ENCODE measurements at regions of chr1 and their contacts with region 1.

Region 1: GRCh38 chr1:37859507-37860345 is at the start of gene MTF1:
- DNase-seq: peak; percentile 98 to 99 (median 98)
- H3K4me3 ChIP-seq: peak within 1 kb of the TSS; percentile 66 to 99 (median 95)
- H3K27ac ChIP-seq: peak within 1 kb of the TSS; percentile 95 to 98
- H3K4me1 ChIP-seq: peaks cover 9 to 25% (median 21%) of the 10 kb centered on the region in 4 experiments
- H3K27me3 ChIP-seq: no peaks in the 10 kb centered on the region

Region 2: DNA sequence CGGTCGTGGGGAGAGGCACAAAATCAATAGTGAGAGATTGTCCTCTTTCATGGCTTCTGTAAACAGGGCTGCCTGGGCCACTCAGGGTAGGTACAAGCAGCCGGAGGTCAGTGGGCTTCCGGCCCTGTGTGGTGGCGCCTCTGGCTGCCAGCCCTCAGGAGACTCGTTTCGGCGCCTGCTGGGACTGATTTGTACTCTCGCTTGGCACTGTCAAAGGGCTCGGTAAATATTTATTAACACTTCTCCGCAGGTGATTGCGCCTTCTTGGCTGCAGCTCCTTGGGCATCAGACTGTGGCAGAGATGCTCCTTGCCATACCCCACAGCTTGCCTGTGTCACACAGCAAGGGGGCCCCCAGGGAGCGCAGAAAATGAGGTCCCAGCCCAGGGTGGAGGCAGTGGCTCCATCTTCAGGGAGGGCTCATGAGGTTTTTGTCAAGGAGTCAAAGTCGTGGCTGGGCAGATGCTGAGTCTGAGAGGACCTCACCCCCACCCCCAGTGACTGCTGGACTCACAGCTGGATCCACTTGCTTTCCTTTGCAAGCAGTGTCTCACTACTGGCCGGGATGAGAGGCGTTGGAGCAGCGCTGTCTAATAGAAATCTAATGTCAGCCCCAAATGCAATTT is 1088.0 kb before region 1 on chr1:
- CTCF ChIA-PET with region 1: no interaction called
- POLR2A ChIA-PET with region 1: no interaction called
- DNase-seq: no peak
- H3K4me3 ChIP-seq: no peak overlapping the region
- H3K27ac ChIP-seq: no peak overlapping the region
- H3K4me1 ChIP-seq: no peaks in the 10 kb centered on the region
- H3K27me3 ChIP-seq: peaks cover 0 to 84% (median 29%) of the 10 kb centered on the region in 5 experiments

Region 3: DNA sequence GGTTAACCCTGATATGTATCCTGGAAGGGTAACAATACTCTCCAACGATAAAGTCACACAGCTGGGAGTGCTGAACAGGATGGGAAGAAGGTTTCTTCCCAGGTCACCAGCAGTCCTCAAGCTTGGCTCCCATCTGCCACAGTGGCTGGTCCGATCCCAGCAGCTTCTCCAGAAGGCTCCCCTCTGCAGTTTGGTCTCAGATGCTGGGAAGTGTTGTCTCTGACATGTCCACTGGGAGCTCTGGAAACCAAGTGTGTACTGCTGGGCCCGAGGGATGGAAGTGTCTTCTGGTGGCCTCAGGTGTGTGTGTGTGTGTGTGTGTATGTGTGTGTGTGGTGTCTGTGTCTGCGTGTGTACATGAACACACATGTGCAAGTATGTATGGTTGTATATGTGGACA is 247.5 kb before region 1 on chr1:
- CTCF ChIA-PET with region 1: no interaction called
- POLR2A ChIA-PET with region 1: no interaction called
- DNase-seq: no peak
- H3K4me3 ChIP-seq: no peak overlapping the region
- H3K27ac ChIP-seq: no peak overlapping the region
- H3K4me1 ChIP-seq: peaks cover 0 to 1% (median 0%) of the 10 kb centered on the region in 4 experiments
- H3K27me3 ChIP-seq: peaks cover 0 to 35% (median 19%) of the 10 kb centered on the region in 5 experiments

Region 4: GRCh38 chr1:37807555-37808368 is 52.0 kb before region 1 on chr1 and contains the starts of genes C1orf122 and YRDC:
- CTCF ChIA-PET with region 1: interaction called, 5 read pairs
- POLR2A ChIA-PET with region 1: interaction called, 14 read pairs
- DNase-seq: peak; percentile 95 to 98 (median 98)
- H3K4me3 ChIP-seq: peak within 1 kb of the TSS; percentile 68 to 98 (median 95)
- H3K27ac ChIP-seq: peak within 1 kb of the TSS; percentile 93 to 97
- H3K4me1 ChIP-seq: peaks cover 5 to 23% (median 20%) of the 10 kb centered on the region in 4 experiments
- H3K27me3 ChIP-seq: no peaks in the 10 kb centered on the region

Region 5: DNA sequence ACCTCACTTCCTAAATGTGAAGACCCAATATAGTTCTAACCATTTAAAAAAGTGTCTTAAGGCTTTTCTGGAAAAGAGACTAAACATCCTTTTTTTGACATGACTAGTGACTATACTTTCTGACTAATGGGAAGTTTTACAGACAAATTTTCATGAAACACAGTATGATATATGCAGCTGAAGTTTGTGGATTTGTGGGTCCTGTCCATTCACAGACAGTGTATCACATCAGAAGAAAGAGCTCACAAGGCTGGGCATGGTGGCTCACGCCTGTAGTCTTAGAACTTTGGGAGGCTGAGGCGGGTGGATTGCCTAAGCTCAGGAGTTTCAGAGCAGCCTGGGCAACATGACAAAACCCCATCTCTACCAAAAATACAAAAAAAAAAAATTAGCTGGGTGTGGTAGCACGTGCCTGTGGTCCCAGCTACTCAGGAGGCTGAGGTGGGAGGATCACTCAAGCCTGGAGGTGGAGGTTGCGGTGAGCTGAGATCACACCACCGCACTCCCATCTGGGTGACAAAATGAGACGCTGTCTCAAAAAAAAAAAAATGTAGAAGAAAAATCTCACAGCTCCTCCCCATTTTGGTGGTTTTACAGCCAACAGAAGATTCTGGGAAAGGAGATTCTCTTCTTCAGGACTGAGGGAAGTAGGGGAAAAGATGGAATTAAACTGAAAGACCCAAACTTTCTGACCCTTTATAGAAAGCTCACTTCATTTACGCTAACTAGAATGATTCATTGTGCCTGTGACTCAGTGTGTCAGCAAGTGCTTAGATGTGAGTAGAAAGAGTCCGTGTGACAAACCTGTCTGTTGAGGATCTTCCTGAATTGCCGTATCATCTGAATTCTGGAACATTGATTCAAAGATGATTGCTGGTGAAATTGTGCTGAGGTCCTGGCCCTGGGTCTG is 36.6 kb before region 1 on chr1:
- CTCF ChIA-PET with region 1: interaction called, 14 read pairs
- POLR2A ChIA-PET with region 1: no interaction called
- DNase-seq: no peak
- H3K4me3 ChIP-seq: no peak overlapping the region
- H3K27ac ChIP-seq: no peak overlapping the region
- H3K4me1 ChIP-seq: no peaks in the 10 kb centered on the region
- H3K27me3 ChIP-seq: no peaks in the 10 kb centered on the region

Region 6: GRCh38 chr1:37840711-37841110 is 19.0 kb before region 1 on chr1:
- CTCF ChIA-PET with region 1: interaction called, 20 read pairs
- POLR2A ChIA-PET with region 1: no interaction called
- DNase-seq: no peak
- H3K4me3 ChIP-seq: no peak overlapping the region
- H3K27ac ChIP-seq: no peak overlapping the region
- H3K4me1 ChIP-seq: peaks cover 0 to 13% (median 2%) of the 10 kb centered on the region in 4 experiments
- H3K27me3 ChIP-seq: no peaks in the 10 kb centered on the region

Region 7: GRCh38 chr1:37846647-37847339 is 12.9 kb before region 1 on chr1:
- CTCF ChIA-PET with region 1: interaction called, 28 read pairs
- POLR2A ChIA-PET with region 1: no interaction called
- DNase-seq: peak; percentile 23 to 47 (median 37)
- H3K4me3 ChIP-seq: peak overlapping the region in 6 of 7 experiments; percentile 11 to 72 (median 50)
- H3K27ac ChIP-seq: peak overlapping the region; percentile 43 to 76
- H3K4me1 ChIP-seq: peaks cover 17 to 49% (median 25%) of the 10 kb centered on the region in 4 experiments
- H3K27me3 ChIP-seq: no peaks in the 10 kb centered on the region

Region 8: DNA sequence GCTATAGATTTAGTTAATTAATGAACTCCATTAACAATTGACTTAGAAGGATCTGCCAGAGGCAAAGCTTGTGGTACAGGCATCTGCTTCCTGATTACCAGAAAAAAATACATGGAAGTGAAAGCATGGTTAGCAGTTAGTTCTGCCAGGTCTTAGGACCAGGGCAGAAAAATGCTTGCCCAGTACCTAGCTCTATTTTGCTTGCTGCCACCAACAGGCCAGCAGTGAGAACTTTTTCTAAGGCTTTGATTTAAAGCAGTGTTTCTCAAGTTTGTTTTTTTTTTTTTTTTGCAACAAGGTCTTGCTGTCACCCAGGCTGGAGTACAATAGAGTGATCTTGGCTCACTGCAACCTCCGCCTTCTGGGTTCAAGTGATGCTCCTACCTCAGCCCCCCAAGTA is 16.1 kb after region 1 on chr1:
- CTCF ChIA-PET with region 1: interaction called, 47 read pairs
- POLR2A ChIA-PET with region 1: no interaction called
- DNase-seq: peak in 2 of 3 donors; percentile 31 to 34
- H3K4me3 ChIP-seq: no peak overlapping the region
- H3K27ac ChIP-seq: no peak overlapping the region
- H3K4me1 ChIP-seq: no peaks in the 10 kb centered on the region
- H3K27me3 ChIP-seq: no peaks in the 10 kb centered on the region

Measured in common myeloid progenitor, CD34-positive (primary cell).